K562 (cell line): ENCODE measurements at regions of chr19 and their contacts with region 1.

Region 1: DNA sequence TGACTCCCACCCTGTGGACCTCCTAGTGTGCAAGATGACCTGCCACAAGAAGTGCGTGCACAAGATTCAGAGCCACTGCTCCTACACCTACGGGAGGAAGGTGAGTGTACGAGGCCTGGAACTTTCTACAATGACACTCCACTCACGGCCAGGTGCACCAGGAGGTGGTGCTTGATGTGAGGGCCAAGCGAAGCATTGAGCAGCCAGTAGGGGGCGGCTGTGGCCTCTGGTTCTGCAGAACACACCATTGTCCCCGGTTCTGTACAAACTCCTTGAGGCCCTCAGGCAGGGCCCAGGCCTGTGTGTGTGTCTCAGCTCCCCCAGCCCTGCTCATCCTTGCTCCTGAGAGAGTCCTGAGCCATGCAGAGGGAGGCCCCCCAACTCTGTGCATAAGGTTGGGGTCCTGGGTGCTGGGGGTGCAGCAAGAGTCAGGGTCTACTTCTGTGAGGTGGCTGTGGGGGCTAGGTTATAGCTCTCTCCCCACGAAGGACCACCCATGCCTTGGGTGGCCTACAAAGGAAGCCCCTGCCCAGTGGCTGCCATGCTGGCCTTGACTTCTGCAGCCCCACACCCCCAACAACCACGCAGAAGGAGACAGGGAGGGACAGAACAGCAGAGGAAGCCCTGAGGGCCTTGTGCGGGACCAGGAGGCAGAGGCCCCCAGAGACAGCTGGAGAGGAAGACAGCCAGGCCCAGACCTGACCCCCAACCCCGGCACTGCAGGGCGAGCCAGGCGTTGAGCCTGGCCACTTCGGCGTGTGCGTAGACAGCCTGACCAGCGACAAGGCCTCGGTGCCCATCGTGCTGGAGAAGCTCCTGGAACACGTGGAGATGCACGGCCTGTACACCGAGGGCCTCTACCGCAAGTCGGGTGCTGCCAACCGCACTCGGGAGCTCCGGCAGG is 9.7 kb upstream of the USE1 start:
- DNase-seq: peak; percentile 64 to 84 (median 70)
- ATAC-seq: peak; percentile 75
- H3K4me3 ChIP-seq: no peak overlapping the region
- H3K27ac ChIP-seq: no peak overlapping the region
- H3K4me1 ChIP-seq: peaks cover 12 to 43% of the 10 kb centered on the region in 2 experiments; a peak in 4 of 5 replicates
- H3K27me3 ChIP-seq: no peaks in the 10 kb centered on the region
- CTCF ChIP-seq: peak; percentile 92 to 96 (median 94)
- EP300 ChIP-seq: no peak
- POLR2A ChIP-seq: no peak
- RAD21 ChIP-seq: peak; percentile 49 to 85; a peak in 3 of 4 replicates

Region 2: GRCh38 chr19:17075035-17075863 is 130.2 kb before region 1 on chr19 and contains the starts of genes HAUS8 and MYO9B:
- CTCF ChIA-PET with region 1: no interaction called
- POLR2A ChIA-PET with region 1: no interaction called
- in situ Hi-C with region 1: no loop called
- intact Hi-C with region 1: loop called (anchors 10 kb)
- DNase-seq: peak; percentile 96 to 100 (median 98)
- ATAC-seq: peak; percentile 90
- H3K4me3 ChIP-seq: peak within 1 kb of the TSS; percentile 78
- H3K27ac ChIP-seq: peak within 1 kb of the TSS; percentile 92
- H3K4me1 ChIP-seq: peaks cover 28 to 58% of the 10 kb centered on the region in 2 experiments; a peak in 4 of 5 replicates
- H3K27me3 ChIP-seq: no peaks in the 10 kb centered on the region; a peak in 1 of 5 replicates
- CTCF ChIP-seq: 0 out of 6 replicates have a peak, but pooled peaks of 1 of the 3 experiments have one; percentile 2
- EP300 ChIP-seq: peak; percentile 7; the same call in 1 of the 2 replicates
- POLR2A ChIP-seq: peak; percentile 98
- RAD21 ChIP-seq: no peak
- polyA plus RNA-seq, gene HAUS8: 34.5 to 53.2 TPM
- polyA plus RNA-seq, gene MYO9B: 2.4 to 3.0 TPM

Region 3: GRCh38 chr19:17245244-17245984 is 39.9 kb after region 1 on chr19 and contains the start of gene NR2F6:
- CTCF ChIA-PET with region 1: no interaction called
- POLR2A ChIA-PET with region 1: interaction called, 4 read pairs
- in situ Hi-C with region 1: no loop called
- intact Hi-C with region 1: loop called (anchors 5 kb)
- DNase-seq: peak in 3 of 4 experiments; percentile 76 to 85 (median 80)
- ATAC-seq: no peak
- H3K4me3 ChIP-seq: peak within 1 kb of the TSS; percentile 80
- H3K27ac ChIP-seq: peak within 1 kb of the TSS; percentile 96
- H3K4me1 ChIP-seq: peaks cover 45 to 89% of the 10 kb centered on the region in 2 experiments
- H3K27me3 ChIP-seq: no peaks in the 10 kb centered on the region
- CTCF ChIP-seq: no peak
- EP300 ChIP-seq: no peak
- POLR2A ChIP-seq: no peak
- RAD21 ChIP-seq: no peak
- polyA plus RNA-seq, gene NR2F6: 0.76 to 3.0 TPM

Region 4: GRCh38 chr19:17275461-17276175 is 70.1 kb after region 1 on chr19:
- CTCF ChIA-PET with region 1: no interaction called
- POLR2A ChIA-PET with region 1: interaction called, 3 read pairs
- in situ Hi-C with region 1: loop called (anchors 5 kb)
- intact Hi-C with region 1: no loop called
- DNase-seq: no peak
- ATAC-seq: no peak
- H3K4me3 ChIP-seq: no peak overlapping the region
- H3K27ac ChIP-seq: no peak overlapping the region
- H3K4me1 ChIP-seq: no peaks in the 10 kb centered on the region
- H3K27me3 ChIP-seq: no peaks in the 10 kb centered on the region
- CTCF ChIP-seq: no peak
- EP300 ChIP-seq: no peak
- POLR2A ChIP-seq: no peak
- RAD21 ChIP-seq: no peak

Region 5: DNA sequence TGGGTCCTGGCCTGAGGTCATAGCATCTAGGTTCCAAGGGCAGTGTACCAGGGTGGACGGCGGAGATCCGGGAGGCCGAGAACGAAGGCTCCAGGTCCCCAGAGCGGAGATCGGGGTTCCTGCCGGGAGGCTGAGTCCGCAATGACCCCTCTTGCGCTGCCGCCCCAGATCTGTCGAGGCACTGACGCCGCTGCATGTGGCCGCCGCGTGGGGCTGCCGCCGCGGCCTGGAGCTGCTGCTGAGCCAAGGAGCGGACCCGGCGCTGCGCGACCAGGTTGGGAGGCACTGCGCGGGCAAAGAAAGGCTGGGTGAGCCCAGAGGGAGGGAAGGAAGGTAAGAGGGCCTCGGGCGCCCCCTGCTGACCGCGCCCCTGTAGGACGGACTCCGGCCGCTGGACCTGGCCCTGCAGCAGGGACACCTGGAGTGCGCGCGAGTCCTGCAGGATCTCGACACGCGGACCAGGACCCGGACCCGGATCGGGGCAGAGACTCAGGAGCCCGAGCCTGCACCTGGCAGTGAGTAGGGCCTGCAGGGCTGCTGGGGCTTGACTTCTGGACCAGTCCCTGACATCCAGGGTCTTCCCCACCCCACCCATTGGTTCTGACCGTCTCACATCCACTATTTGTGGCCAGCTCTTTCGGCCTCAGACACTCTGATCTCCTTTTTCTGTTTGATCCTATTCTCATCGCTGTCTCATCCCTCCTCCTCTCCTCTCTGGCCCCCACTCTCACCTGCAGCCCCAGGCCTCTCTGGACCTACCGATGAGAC is 77.2 kb after region 1 on chr19:
- CTCF ChIA-PET with region 1: interaction called, 23 read pairs
- POLR2A ChIA-PET with region 1: no interaction called
- in situ Hi-C with region 1: loop called (anchors 5 kb)
- intact Hi-C with region 1: loop called (anchors 1 kb)
- DNase-seq: peak; percentile 85 to 91 (median 88)
- ATAC-seq: peak; percentile 96
- H3K4me3 ChIP-seq: peak overlapping the region; percentile 51
- H3K27ac ChIP-seq: peak overlapping the region; percentile 58; the same call in 2 of the 3 replicates
- H3K4me1 ChIP-seq: peaks cover 2 to 31% of the 10 kb centered on the region in 2 experiments
- H3K27me3 ChIP-seq: no peaks in the 10 kb centered on the region
- CTCF ChIP-seq: peak; percentile 88 to 95 (median 94)
- EP300 ChIP-seq: no peak
- POLR2A ChIP-seq: 0 out of 2 replicates have a peak, but pooled peaks have one; percentile 32
- RAD21 ChIP-seq: peak; percentile 86 to 94

Region 6: DNA sequence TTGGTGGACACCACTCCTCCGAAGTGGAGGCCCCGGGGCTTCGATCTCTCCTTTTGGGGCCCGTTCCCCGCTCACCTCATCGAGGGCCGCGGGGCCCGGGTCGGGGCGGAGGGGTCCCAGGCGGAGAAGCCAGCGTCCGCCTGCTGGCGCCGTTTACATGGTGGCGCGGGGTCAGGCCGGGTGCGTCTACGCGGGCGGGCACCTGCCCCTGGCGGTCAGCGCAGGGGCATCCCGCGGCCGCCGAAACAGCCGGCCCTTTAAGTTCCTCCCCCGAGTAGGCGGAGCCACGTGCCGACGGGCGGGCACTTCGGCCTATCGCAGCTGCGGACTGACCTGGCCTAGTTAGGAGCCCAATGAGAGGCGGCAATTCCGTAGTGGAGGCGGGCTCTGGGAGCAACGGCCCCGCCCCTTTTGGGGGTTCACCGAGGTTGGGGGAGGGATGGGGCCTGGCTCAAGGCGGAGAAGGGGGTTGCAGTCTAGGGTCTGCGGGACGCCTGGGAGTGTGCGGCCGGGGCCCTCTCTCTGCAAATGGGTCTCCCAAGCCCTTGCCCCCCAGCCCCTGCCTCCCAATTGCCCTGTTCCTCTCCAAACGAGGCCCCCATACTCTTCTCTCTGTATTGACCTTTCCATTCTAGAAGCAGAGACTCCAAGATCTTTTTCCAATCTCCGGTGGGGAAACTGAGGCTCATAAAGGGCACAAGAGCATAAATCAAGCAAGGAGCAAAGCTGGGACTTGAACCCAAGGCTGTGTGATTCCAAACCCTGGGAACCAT is 97.9 kb after region 1 on chr19 and contains the start of gene ABHD8:
- CTCF ChIA-PET with region 1: no interaction called
- POLR2A ChIA-PET with region 1: no interaction called
- in situ Hi-C with region 1: no loop called
- intact Hi-C with region 1: no loop called
- DNase-seq: peak; percentile 92 to 98 (median 96)
- ATAC-seq: peak; percentile 92
- H3K4me3 ChIP-seq: peak within 1 kb of the TSS; percentile 59
- H3K27ac ChIP-seq: peak within 1 kb of the TSS; percentile 77
- H3K4me1 ChIP-seq: peaks cover 26 to 60% of the 10 kb centered on the region in 2 experiments; a peak in 4 of 5 replicates
- H3K27me3 ChIP-seq: no peaks in the 10 kb centered on the region
- CTCF ChIP-seq: peak; percentile 70 to 89 (median 70); a peak in 5 of 6 replicates
- EP300 ChIP-seq: no peak
- POLR2A ChIP-seq: peak; percentile 64
- RAD21 ChIP-seq: peak in 1 of 2 experiments; percentile 24; a peak in 1 of 4 replicates
- polyA plus RNA-seq, gene ABHD8: 0.04 TPM in 1 of 2 experiments, not detected in the other